Esophagus squamous epithelium (tissue), 5 donors: ENCODE measurements at regions of chr15 and their contacts with region 1.

Region 1: GRCh38 chr15:69058830-69059556 is 44.5 kb downstream of the NOX5 start:
- DNase-seq: no peak
- H3K4me3 ChIP-seq: no peak overlapping the region
- H3K27ac ChIP-seq: no peak overlapping the region
- H3K4me1 ChIP-seq: peaks cover 6 to 9% (median 7%) of the 10 kb centered on the region in 3 donors
- H3K27me3 ChIP-seq: peaks cover 0 to 22% (median 0%) of the 10 kb centered on the region in 4 donors
- CTCF ChIP-seq: peak; percentile 57 to 93 (median 91)
- POLR2A ChIP-seq: no peak

Region 2: GRCh38 chr15:69265347-69265955 is 206.5 kb after region 1 on chr15:
- intact Hi-C with region 1: loop called (anchors 10 kb)
- DNase-seq: no peak
- H3K4me3 ChIP-seq: no peak overlapping the region
- H3K27ac ChIP-seq: no peak overlapping the region
- H3K4me1 ChIP-seq: no peaks in the 10 kb centered on the region
- H3K27me3 ChIP-seq: no peaks in the 10 kb centered on the region
- CTCF ChIP-seq: peak; percentile 28 to 67 (median 52)
- POLR2A ChIP-seq: no peak

Region 3: GRCh38 chr15:69394556-69395282 is 335.7 kb after region 1 on chr15:
- intact Hi-C with region 1: loop called (anchors 5 kb)
- DNase-seq: no peak
- H3K4me3 ChIP-seq: no peak overlapping the region
- H3K27ac ChIP-seq: no peak overlapping the region
- H3K4me1 ChIP-seq: peaks cover 0 to 47% (median 5%) of the 10 kb centered on the region in 3 donors
- H3K27me3 ChIP-seq: peaks cover 0 to 14% (median 0%) of the 10 kb centered on the region in 4 donors
- CTCF ChIP-seq: peak; percentile 85 to 98 (median 94)
- POLR2A ChIP-seq: no peak